ENCODE measurements at regions of chr7 and their contacts with region 1.

Region 1: GRCh38 chr7:21427182-21427870 is 557 bp upstream of the SP4 start:
- DNase-seq: peak; percentile 99
- ATAC-seq: peak; percentile 81
- H3K4me3 Mint-ChIP-seq: peak overlapping the region; percentile 99
- H3K27ac Mint-ChIP-seq: peak overlapping the region; percentile 99
- H3K4me1 Mint-ChIP-seq: peaks cover 46% of the 10 kb centered on the region
- H3K27me3 Mint-ChIP-seq: no peaks in the 10 kb centered on the region

Region 2: DNA sequence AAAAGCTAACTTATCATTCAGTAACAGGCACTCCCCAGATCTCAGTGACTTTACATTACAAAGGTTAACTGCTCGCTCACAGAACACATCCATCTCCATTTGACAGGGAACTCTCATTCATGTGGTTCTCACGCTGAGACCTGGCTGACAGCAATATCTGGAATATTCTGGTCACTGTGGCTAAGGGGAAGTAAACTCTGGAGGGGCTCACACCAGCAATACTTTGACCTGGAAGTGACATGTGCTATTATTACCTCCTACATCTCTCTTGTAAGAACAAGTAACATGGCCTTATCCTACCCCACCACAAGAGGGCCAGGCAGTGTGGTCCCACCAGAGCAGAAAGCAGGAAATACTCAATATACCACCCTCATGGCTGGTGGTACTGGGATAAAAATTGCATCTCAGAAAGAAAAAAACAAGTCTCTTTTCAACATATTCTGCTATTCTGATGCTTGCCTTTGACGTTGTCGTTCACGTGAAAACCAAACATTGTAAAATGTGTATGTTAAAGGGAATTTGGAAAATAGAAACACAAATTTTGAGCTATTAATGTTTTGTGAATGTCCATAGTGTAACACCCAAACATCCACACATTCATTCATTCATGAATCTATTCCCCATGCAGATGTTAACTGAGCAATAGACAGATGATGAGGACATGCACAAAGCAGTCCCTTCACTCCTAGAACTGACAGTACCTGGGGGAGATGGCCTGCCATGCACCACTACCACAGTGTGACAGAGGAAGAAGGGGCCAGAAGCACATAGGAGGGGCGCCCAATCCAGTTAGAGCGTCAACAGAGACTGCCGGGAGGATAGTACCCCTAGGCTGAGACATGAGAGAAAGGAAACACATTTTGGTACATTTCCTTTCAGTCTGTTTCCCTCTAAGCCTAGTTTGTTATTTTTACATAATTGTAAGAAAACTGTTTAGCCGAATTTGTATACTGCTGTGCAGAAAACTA is 165.4 kb before region 1 on chr7:
- CTCF ChIA-PET with region 1: interaction called, 15 read pairs
- POLR2A ChIA-PET with region 1: interaction called, 3 read pairs
- DNase-seq: peak; percentile 79
- ATAC-seq: peak; percentile 95
- H3K4me3 Mint-ChIP-seq: no peak overlapping the region
- H3K27ac Mint-ChIP-seq: peak overlapping the region; percentile 75
- H3K4me1 Mint-ChIP-seq: peaks cover 17% of the 10 kb centered on the region
- H3K27me3 Mint-ChIP-seq: no peaks in the 10 kb centered on the region

Region 3: GRCh38 chr7:21352540-21353387 is 74.6 kb before region 1 on chr7:
- CTCF ChIA-PET with region 1: interaction called, 3 read pairs
- POLR2A ChIA-PET with region 1: interaction called, 51 read pairs
- DNase-seq: peak; percentile 54
- ATAC-seq: peak; percentile 86
- H3K4me3 Mint-ChIP-seq: peak overlapping the region; percentile 63
- H3K27ac Mint-ChIP-seq: peak overlapping the region; percentile 96
- H3K4me1 Mint-ChIP-seq: peaks cover 70% of the 10 kb centered on the region
- H3K27me3 Mint-ChIP-seq: no peaks in the 10 kb centered on the region

Region 4: GRCh38 chr7:21412410-21412851 is 14.9 kb before region 1 on chr7:
- CTCF ChIA-PET with region 1: interaction called, 16 read pairs
- POLR2A ChIA-PET with region 1: interaction called, 9 read pairs
- DNase-seq: no peak
- ATAC-seq: peak; percentile 75
- H3K4me3 Mint-ChIP-seq: peak overlapping the region; percentile 15
- H3K27ac Mint-ChIP-seq: peak overlapping the region; percentile 83
- H3K4me1 Mint-ChIP-seq: peaks cover 35% of the 10 kb centered on the region
- H3K27me3 Mint-ChIP-seq: no peaks in the 10 kb centered on the region